Activated T-helper 1 cell treated with anti-CD3 and anti-CD28 coated beads, Interleukin-12 subunit alpha, Interleukin-12 subunit beta, Interleukin-2, Interleukin-4 antibody, amounts not matched to agents 30 ng/mL and 10 ng/mL and 1 ng/mL, durations not matched to agents 14 hours and 24 hours and 36 hours (primary cell): ENCODE measurements at regions of chr7 and their contacts with region 1.

Region 1: DNA sequence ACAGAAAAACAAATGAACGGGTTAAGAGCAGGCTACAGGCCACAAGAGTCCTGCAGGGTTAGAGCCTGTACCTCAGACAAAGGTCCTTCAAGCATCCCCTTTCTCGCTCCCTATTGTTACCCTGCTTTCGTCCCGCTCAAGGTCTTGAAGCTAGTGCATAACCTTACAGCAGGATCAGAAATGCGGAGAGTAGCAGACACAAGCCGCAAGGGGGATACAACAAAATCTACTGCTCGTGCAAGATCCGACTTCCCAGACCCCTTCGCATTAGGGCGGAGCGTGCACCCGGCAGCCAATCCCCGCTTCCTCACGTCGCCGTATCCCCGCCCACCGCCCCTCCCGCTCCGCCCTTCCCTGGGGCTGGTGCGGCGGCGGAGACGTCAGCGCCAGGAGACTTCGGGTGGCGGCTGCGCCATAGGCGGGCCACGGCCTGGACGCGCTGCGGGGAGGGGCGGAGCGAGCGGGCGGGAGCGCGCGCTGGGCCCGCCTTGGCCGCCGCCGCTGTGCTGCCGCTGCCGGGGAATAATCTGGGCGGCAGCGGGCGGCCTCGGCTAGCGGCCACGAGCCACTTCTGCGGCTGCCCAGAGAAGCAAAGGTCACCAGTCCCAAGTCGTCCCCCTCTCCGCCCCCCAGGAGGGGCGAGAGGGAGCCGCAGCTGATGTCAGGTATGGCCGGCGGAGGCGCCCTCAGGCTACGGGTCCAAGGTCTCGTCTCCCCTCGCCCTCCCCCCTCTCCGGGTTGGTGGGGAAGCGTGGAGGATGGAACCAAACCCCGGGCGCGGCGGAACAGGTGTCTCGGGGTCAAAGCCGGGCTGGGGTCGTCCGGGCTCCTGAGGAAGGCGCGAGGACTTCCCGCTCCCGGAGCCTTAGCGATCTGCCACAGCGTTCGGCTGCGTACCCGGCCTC is at the start of gene C1GALT1:
- DNase-seq: peak; percentile 94
- H3K4me3 Mint-ChIP-seq: peak within 1 kb of the TSS; percentile 94
- H3K27ac Mint-ChIP-seq: peak within 1 kb of the TSS; percentile 99
- H3K4me1 Mint-ChIP-seq: peaks cover 6% of the 10 kb centered on the region
- H3K27me3 Mint-ChIP-seq: no peaks in the 10 kb centered on the region
- total RNA-seq, gene C1GALT1: 35.8 and 41.4 TPM in 2 replicates

Region 2: DNA sequence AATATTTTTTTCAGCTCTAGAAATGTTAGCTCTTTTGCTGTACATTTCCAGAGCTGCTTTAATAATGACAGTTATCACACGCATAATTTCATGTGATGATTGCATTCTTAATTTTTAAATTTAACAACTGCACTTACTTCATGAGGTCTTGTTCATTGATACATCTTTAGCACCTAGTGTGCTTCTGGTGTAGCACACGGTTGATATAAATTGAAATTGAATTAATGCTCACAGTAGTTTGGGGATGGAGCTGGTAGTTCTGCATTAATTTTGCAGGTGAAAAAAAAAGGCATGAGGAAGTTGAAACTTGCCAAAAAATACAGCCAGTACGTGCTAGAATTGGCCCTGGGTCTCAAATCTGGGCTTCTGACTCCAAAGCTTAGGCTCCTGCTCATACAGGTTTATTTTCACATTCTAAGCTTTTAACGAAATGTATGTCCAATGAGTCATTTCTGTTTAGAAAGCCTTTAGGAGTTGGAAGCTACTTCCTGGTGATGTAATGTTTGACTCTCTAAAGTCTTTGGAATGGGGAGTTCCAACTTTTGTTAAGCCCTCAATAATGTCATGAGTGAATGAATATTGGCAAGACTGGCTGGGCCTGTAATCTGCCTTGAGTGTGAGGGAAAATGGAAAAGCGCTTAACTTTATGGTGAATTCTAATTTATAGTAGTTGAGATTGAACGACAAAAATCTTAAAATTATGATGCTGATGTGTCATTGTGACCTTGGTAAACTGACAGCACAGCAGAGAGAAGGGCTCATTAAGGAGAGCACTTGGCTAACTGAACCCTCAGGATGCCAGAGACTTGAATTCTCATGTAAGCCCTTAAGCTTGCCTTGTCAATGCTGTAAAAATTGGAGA is 797.1 kb before region 1 on chr7:
- intact Hi-C with region 1: no loop called
- DNase-seq: no peak
- H3K4me3 Mint-ChIP-seq: no peak overlapping the region
- H3K27ac Mint-ChIP-seq: no peak overlapping the region
- H3K4me1 Mint-ChIP-seq: peaks cover 55% of the 10 kb centered on the region
- H3K27me3 Mint-ChIP-seq: no peaks in the 10 kb centered on the region

Region 3: DNA sequence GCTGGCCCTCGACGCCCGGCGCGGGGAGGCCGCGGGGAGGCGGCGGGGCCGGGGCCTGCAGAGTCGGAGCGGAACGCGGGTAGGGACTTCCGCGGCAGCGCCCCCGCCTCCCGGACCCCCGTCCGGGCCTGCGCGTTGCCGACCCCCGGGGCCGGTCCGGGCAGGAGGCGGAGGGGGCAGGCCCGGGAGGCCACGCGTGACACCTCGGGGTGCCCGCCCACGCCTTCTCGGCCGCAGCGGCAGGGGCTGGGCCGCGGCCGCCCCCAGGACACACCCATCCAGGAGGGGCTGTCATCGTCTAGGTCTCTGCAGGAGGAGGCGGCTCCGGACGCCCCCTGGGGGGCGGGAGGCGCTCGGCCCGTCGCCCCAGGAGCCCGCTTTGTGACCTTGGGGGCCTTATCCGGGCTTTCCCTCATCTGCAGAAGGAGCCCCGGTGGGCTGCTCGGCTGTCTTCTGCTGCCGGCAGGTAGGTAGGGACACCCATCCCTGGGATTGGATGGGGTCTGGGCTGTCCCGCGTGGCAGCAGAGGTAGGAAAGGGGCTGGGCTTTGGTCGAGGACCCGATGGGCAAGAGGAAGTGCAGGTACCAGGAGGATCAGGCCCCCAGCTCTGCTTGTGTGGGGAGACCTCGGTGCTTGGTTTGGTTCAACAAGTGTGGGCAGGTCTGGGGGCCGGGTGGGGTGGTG is 544.7 kb before region 1 on chr7:
- intact Hi-C with region 1: loop called (anchors 2 kb)
- DNase-seq: peak; percentile 48
- H3K4me3 Mint-ChIP-seq: peak overlapping the region; percentile 84
- H3K27ac Mint-ChIP-seq: peak overlapping the region; percentile 87
- H3K4me1 Mint-ChIP-seq: peaks cover 19% of the 10 kb centered on the region
- H3K27me3 Mint-ChIP-seq: no peaks in the 10 kb centered on the region

Region 4: GRCh38 chr7:7103343-7104313 is 78.8 kb before region 1 on chr7:
- intact Hi-C with region 1: loop called (anchors 1 kb)
- DNase-seq: no peak
- H3K4me3 Mint-ChIP-seq: no peak overlapping the region
- H3K27ac Mint-ChIP-seq: no peak overlapping the region
- H3K4me1 Mint-ChIP-seq: peaks cover 16% of the 10 kb centered on the region
- H3K27me3 Mint-ChIP-seq: no peaks in the 10 kb centered on the region

Region 5: DNA sequence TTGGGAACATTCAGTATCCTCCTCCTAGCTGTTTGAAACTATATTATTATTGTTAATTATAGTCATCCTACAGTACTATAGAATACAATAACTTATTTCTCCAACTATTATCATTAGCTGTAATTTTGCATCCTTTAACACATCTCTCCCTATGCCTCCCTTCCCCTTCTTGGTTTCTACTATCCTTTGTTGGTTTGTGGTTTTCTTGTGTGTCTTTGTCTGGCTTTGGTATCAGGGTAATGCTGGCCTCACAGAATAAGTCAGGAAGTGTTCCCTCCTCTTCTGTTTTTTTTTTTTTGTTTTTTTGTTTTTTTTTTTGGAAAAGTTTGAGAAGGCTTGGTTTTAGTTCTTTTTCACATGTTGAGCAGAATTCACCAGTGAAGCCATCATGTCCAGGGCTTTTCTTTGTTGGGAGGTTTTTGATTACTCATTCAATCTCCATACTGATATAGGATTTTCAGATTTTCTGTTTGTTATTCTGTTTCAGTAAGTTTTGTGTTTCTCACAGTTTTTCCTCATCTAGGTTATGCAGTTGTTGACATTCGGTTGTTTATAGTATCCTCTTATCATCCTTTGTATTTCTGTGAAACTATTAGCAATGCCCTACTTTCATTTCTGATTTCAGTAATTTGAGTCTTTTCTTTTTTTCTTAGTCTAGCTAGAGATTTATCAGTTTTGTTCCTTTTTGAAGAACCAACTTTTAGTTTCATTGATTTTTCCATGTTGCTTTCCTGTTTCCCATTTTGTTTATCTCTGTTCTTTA is 21.6 kb after region 1 on chr7:
- intact Hi-C with region 1: loop called (anchors 1 kb)
- DNase-seq: no peak
- H3K4me3 Mint-ChIP-seq: peak overlapping the region; percentile 61
- H3K27ac Mint-ChIP-seq: peak overlapping the region; percentile 59
- H3K4me1 Mint-ChIP-seq: peaks cover 72% of the 10 kb centered on the region
- H3K27me3 Mint-ChIP-seq: no peaks in the 10 kb centered on the region

Region 6: DNA sequence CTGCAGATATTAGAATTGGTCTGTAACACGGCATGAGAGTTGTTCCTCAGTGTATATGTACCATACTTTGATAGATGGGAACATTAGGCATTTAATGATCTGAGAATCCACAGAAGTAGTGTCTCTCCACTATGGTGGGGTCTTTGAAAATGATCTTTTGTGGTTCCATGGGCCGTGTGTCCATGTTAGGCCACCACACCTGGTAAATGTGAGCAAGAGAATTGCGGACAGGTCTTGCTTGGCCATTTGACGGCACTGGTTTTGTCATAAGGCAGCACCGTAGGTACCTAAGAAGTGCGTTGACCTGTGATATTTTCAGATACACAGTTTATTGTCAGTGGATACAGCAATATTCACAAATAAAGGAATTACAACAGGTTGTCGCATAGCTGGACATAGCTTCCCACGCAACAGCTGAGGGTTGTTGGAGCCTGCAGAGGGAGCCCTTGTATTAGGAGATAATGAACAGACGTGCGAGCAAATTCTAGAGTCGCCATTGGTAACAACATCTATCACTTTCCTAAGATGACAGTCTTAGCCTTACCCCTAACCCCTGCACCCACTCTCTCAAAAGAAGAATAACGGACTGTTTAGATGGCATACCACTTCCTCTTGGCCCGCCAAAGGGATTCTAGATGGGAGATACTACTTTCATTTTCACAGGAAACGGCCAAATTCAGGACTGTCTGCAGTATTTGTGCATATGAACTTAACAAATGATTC is 241.9 kb after region 1 on chr7:
- intact Hi-C with region 1: loop called (anchors 5 kb)
- DNase-seq: no peak
- H3K4me3 Mint-ChIP-seq: peak overlapping the region; percentile 67
- H3K27ac Mint-ChIP-seq: no peak overlapping the region
- H3K4me1 Mint-ChIP-seq: no peaks in the 10 kb centered on the region
- H3K27me3 Mint-ChIP-seq: peaks cover 4% of the 10 kb centered on the region

Region 7: GRCh38 chr7:7566651-7567611 is 384.5 kb after region 1 on chr7 and contains the start of gene MIOS:
- intact Hi-C with region 1: loop called (anchors 1 kb)
- DNase-seq: peak; percentile 80
- H3K4me3 Mint-ChIP-seq: peak within 1 kb of the TSS; percentile 88
- H3K27ac Mint-ChIP-seq: peak within 1 kb of the TSS; percentile 73
- H3K4me1 Mint-ChIP-seq: peaks cover 35% of the 10 kb centered on the region
- H3K27me3 Mint-ChIP-seq: no peaks in the 10 kb centered on the region
- total RNA-seq, gene MIOS: 29.6 and 31.6 TPM in 2 replicates